Naive thymus-derived CD4-positive, alpha-beta T cell (primary cell): ENCODE measurements at regions of chr5 and their contacts with region 1.

Region 1: DNA sequence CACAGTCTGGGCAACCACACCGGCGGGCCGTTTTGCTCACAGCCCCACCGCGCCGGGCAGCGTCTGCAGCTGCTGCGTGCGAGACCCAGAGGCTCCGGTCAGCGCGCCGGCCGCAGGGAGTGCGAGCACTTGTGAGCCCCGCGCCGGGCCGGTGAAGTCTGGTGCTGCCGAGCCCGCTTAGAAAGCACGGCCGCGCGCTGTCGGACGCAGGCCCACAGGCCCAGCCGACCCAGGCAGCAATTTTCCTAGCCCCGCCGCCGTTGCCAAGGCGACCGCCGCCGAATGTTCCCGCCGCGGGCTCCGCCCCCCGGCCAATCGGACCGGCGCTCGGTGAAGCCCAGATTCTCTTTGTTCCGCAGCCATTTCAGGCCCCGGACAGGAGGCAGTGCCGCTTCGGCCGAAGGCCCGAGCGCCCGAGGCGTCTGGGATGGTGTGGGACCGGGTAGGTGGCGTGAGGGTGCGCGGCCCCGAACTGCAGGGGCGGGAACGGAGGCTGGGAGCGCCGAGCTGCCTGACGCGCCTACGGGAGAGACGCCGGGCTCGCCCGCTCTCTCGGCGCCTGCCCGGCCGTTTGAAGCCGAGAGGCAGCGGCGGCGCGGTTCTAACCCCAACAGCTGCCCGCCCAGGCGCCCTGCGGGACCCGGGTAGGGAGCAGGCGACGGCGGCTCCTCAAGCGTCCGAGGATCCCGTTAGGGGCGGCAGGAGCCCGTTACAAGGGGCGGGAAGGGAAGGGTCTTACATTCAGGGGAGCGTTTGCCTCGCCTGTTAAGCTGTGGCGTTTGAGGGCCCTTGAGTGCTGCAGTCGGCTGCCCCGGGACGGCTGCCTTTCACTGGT is at the start of gene TNPO1:
- DNase-seq: peak; percentile 75 to 89 (median 84)
- ATAC-seq: peak; percentile 87
- H3K4me3 ChIP-seq: peak within 1 kb of the TSS; percentile 83
- H3K4me3 Mint-ChIP-seq: peak within 1 kb of the TSS; percentile 90 to 100 (median 98)
- H3K27ac ChIP-seq: peak within 1 kb of the TSS; percentile 93
- H3K27ac Mint-ChIP-seq: peak within 1 kb of the TSS; percentile 81 to 98 (median 94)
- H3K4me1 ChIP-seq: peaks cover 6 to 21% of the 10 kb centered on the region in 2 donors
- H3K4me1 Mint-ChIP-seq: peaks cover 14 to 32% (median 23%) of the 10 kb centered on the region in 7 donors
- H3K27me3 ChIP-seq: no peaks in the 10 kb centered on the region
- H3K27me3 Mint-ChIP-seq: peaks cover 8 to 30% (median 20%) of the 10 kb centered on the region in 5 donors
- total RNA-seq, gene TNPO1: 52.8 to 96.3 (median 82.1) TPM

Region 2: DNA sequence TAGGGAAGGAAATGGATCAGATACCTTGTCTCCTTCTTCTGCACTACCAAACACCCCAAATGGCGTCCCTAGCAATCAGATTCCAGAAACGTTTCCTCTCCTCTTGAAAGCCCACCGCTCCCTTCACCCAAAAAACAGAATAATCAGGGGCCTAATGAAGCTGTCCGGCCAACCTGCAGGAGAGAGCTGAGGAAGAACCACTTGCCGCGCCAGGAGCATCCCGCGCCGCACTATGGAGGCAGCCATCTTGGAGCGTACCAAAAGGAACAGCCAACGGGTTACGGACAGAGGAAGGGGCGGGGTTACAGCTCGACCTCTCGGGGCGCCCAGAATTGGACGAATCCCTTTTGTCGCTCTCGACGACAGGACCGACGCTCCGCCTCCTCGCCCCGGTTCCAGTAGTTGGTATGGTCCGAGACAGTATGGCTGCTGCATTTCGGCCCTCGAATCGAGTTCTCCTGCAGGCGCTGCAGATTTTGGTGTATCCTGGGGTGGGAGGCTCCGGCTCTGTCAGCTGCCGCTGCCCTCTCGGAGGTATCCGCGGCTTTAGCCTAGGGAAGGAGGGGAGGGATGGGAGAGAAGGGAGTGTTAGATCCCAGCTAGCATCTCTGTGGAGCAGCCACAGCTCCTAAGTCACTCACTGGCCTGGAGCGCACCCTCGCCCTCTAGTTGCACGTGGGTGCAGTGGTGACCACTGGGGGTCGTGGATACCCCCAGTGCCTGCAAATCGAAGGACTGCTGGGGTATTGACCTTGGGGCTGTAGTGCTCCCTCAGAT is 496.4 kb before region 1 on chr5 and contains the starts of genes MRPS27 and PTCD2:
- CTCF ChIA-PET with region 1: no interaction called
- POLR2A ChIA-PET with region 1: no interaction called
- intact Hi-C with region 1: loop called in 1 of 2 experiments (anchors 5 kb)
- DNase-seq: peak; percentile 71 to 96 (median 94)
- ATAC-seq: peak; percentile 100
- H3K4me3 ChIP-seq: peak within 1 kb of the TSS; percentile 93
- H3K4me3 Mint-ChIP-seq: peak within 1 kb of the TSS; percentile 93 to 100 (median 98)
- H3K27ac ChIP-seq: peak within 1 kb of the TSS; percentile 89
- H3K27ac Mint-ChIP-seq: peak within 1 kb of the TSS; percentile 88 to 99 (median 95)
- H3K4me1 ChIP-seq: peaks cover 7 to 14% of the 10 kb centered on the region in 2 donors
- H3K4me1 Mint-ChIP-seq: peaks cover 24 to 65% (median 47%) of the 10 kb centered on the region in 7 donors
- H3K27me3 ChIP-seq: no peaks in the 10 kb centered on the region
- H3K27me3 Mint-ChIP-seq: no peaks in the 10 kb centered on the region
- total RNA-seq, gene MRPS27: 36.6 to 54.0 (median 39.5) TPM
- total RNA-seq, gene PTCD2: 5.0 to 12.6 (median 11.2) TPM

Region 3: GRCh38 chr5:72611118-72611730 is 205.3 kb before region 1 on chr5:
- CTCF ChIA-PET with region 1: interaction called, 29 read pairs
- POLR2A ChIA-PET with region 1: no interaction called
- intact Hi-C with region 1: loop called in 1 of 2 experiments (anchors 1 kb)
- DNase-seq: peak in 8 of 9 donors; percentile 8 to 43 (median 27)
- ATAC-seq: peak; percentile 76
- H3K4me3 ChIP-seq: no peak overlapping the region
- H3K4me3 Mint-ChIP-seq: no peak overlapping the region
- H3K27ac ChIP-seq: no peak overlapping the region
- H3K27ac Mint-ChIP-seq: no peak overlapping the region
- H3K4me1 ChIP-seq: no peaks in the 10 kb centered on the region
- H3K4me1 Mint-ChIP-seq: peaks cover 0 to 7% (median 5%) of the 10 kb centered on the region in 7 donors
- H3K27me3 ChIP-seq: no peaks in the 10 kb centered on the region
- H3K27me3 Mint-ChIP-seq: peaks cover 3 to 23% (median 15%) of the 10 kb centered on the region in 5 donors

Region 4: GRCh38 chr5:72847989-72848473 is 31.5 kb after region 1 on chr5:
- CTCF ChIA-PET with region 1: interaction called, 4 read pairs
- POLR2A ChIA-PET with region 1: interaction called, 16 read pairs
- intact Hi-C with region 1: loop called (anchors 1 kb)
- DNase-seq: peak; percentile 67 to 86 (median 83)
- ATAC-seq: peak; percentile 94
- H3K4me3 ChIP-seq: peak overlapping the region; percentile 93
- H3K4me3 Mint-ChIP-seq: peak overlapping the region; percentile 92 to 99 (median 98)
- H3K27ac ChIP-seq: peak overlapping the region; percentile 86
- H3K27ac Mint-ChIP-seq: peak overlapping the region; percentile 93 to 98 (median 96)
- H3K4me1 ChIP-seq: peaks cover 24 to 31% of the 10 kb centered on the region in 2 donors
- H3K4me1 Mint-ChIP-seq: peaks cover 30 to 88% (median 64%) of the 10 kb centered on the region in 7 donors
- H3K27me3 ChIP-seq: no peaks in the 10 kb centered on the region
- H3K27me3 Mint-ChIP-seq: peaks cover 0 to 16% (median 0%) of the 10 kb centered on the region in 5 donors

Region 5: GRCh38 chr5:73387601-73388305 is 571.2 kb after region 1 on chr5:
- CTCF ChIA-PET with region 1: no interaction called
- POLR2A ChIA-PET with region 1: no interaction called
- intact Hi-C with region 1: loop called in 1 of 2 experiments (anchors 2 kb)
- DNase-seq: peak in 8 of 9 donors; percentile 28 to 90 (median 82)
- ATAC-seq: peak; percentile 96
- H3K4me3 ChIP-seq: peak overlapping the region; percentile 3
- H3K4me3 Mint-ChIP-seq: peak overlapping the region; percentile 39 to 76 (median 72)
- H3K27ac ChIP-seq: no peak overlapping the region
- H3K27ac Mint-ChIP-seq: peak overlapping the region in 6 of 9 donors; percentile 1 to 81 (median 37)
- H3K4me1 ChIP-seq: peaks cover 20 to 31% of the 10 kb centered on the region in 2 donors
- H3K4me1 Mint-ChIP-seq: peaks cover 16 to 34% (median 24%) of the 10 kb centered on the region in 7 donors
- H3K27me3 ChIP-seq: peaks cover 8 to 11% of the 10 kb centered on the region in 2 donors
- H3K27me3 Mint-ChIP-seq: peaks cover 24 to 68% (median 35%) of the 10 kb centered on the region in 5 donors

Region 6: GRCh38 chr5:73498057-73499008 is 681.8 kb after region 1 on chr5 and contains the start of gene BTF3:
- CTCF ChIA-PET with region 1: no interaction called
- POLR2A ChIA-PET with region 1: no interaction called
- intact Hi-C with region 1: loop called in 1 of 2 experiments (anchors 1 kb)
- DNase-seq: peak; percentile 83 to 94 (median 91)
- ATAC-seq: peak; percentile 96
- H3K4me3 ChIP-seq: peak within 1 kb of the TSS; percentile 81
- H3K4me3 Mint-ChIP-seq: peak within 1 kb of the TSS; percentile 92 to 99 (median 97)
- H3K27ac ChIP-seq: peak within 1 kb of the TSS; percentile 93
- H3K27ac Mint-ChIP-seq: peak within 1 kb of the TSS; percentile 97 to 100 (median 99)
- H3K4me1 ChIP-seq: peaks cover 22 to 31% of the 10 kb centered on the region in 2 donors
- H3K4me1 Mint-ChIP-seq: peaks cover 26 to 57% (median 41%) of the 10 kb centered on the region in 7 donors
- H3K27me3 ChIP-seq: peaks cover 0 to 4% of the 10 kb centered on the region in 2 donors
- H3K27me3 Mint-ChIP-seq: peaks cover 4 to 15% (median 13%) of the 10 kb centered on the region in 5 donors
- total RNA-seq, gene BTF3: 557 to 758 (median 700) TPM